Panc1 (cell line): ENCODE measurements at regions of chr6 and their contacts with region 1.

Region 1: GRCh38 chr6:36526066-36526465 is 21.2 kb downstream of the STK38 start:
- DNase-seq: no peak
- ATAC-seq: no peak
- H3K4me3 ChIP-seq: no peak overlapping the region
- H3K27ac ChIP-seq: no peak overlapping the region
- H3K4me1 ChIP-seq: no peaks in the 10 kb centered on the region
- H3K27me3 ChIP-seq: no peaks in the 10 kb centered on the region
- CTCF ChIP-seq: no peak

Region 2: GRCh38 chr6:36559011-36559793 is 33.1 kb after region 1 on chr6:
- CTCF ChIA-PET with region 1: no interaction called
- POLR2A ChIA-PET with region 1: interaction called, 13 read pairs
- in situ Hi-C with region 1: no loop called
- intact Hi-C with region 1: no loop called
- DNase-seq: no peak
- ATAC-seq: no peak
- H3K4me3 ChIP-seq: no peak overlapping the region
- H3K27ac ChIP-seq: no peak overlapping the region
- H3K4me1 ChIP-seq: no peaks in the 10 kb centered on the region
- H3K27me3 ChIP-seq: no peaks in the 10 kb centered on the region
- CTCF ChIP-seq: no peak

Region 3: GRCh38 chr6:36650848-36651478 is 124.9 kb after region 1 on chr6:
- CTCF ChIA-PET with region 1: no interaction called
- POLR2A ChIA-PET with region 1: no interaction called
- in situ Hi-C with region 1: no loop called
- intact Hi-C with region 1: no loop called
- DNase-seq: no peak
- ATAC-seq: peak; percentile 55; the same call in 1 of the 2 replicates
- H3K4me3 ChIP-seq: no peak overlapping the region
- H3K27ac ChIP-seq: no peak overlapping the region
- H3K4me1 ChIP-seq: no peaks in the 10 kb centered on the region
- H3K27me3 ChIP-seq: no peaks in the 10 kb centered on the region
- CTCF ChIP-seq: no peak